H1 (cell line): ENCODE measurements at regions of chr7 and their contacts with region 1.

Region 1: GRCh38 chr7:96131525-96131924 is 190.4 kb downstream of the SLC25A13 start:
- DNase-seq: no peak
- H3K4me3 ChIP-seq: no peak overlapping the region
- H3K27ac ChIP-seq: no peak overlapping the region
- H3K4me1 ChIP-seq: 0 out of 7 replicates have a peak, but pooled peaks cover 0 to 2% (median 0%) of the 10 kb centered on the region in 4 experiments
- H3K27me3 ChIP-seq: no peaks in the 10 kb centered on the region
- CTCF ChIP-seq: peak; percentile 9 to 55 (median 34)
- EP300 ChIP-seq: no peak
- POLR2A ChIP-seq: no peak
- RAD21 ChIP-seq: peak; percentile 68

Region 2: DNA sequence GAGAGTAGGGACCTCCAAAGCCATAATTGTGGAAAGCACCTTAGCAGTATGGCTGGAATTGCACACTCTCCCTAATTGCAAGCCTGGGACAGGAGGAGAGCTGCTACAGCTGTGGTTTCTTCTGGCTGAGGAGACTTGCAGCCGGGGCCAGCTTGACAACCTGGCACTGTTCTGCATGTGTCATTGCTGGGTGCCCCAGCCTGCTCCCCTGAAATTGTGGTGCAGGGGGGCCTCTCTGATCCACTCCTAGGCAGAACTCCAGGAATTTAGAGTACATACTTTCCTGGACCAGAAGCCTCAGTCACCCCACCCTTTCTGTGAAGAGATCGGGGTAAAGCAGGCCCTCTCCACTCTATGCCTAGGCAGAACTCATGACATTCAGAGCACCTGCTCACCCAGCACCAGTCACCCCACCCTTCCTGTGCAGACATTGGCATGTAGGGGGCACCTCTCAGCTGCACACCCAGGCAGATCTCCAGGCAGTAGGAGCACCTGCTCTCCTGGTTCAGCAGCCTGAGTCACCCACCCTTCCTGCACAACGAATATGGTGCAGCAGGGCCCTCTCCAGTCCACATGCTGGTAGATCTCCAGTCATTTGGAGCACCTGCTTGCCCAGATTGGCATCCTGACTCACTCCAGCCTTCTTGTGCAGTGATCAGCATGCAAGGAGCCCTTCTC is 393.6 kb before region 1 on chr7:
- CTCF ChIA-PET with region 1: no interaction called
- POLR2A ChIA-PET with region 1: no interaction called
- DNase-seq: no peak
- H3K4me3 ChIP-seq: no peak overlapping the region
- H3K27ac ChIP-seq: no peak overlapping the region
- H3K4me1 ChIP-seq: no peaks in the 10 kb centered on the region
- H3K27me3 ChIP-seq: no peaks in the 10 kb centered on the region
- CTCF ChIP-seq: no peak
- EP300 ChIP-seq: no peak
- POLR2A ChIP-seq: no peak
- RAD21 ChIP-seq: no peak

Region 3: GRCh38 chr7:96034940-96035727 is 96.4 kb before region 1 on chr7:
- CTCF ChIA-PET with region 1: no interaction called
- POLR2A ChIA-PET with region 1: no interaction called
- DNase-seq: no peak
- H3K4me3 ChIP-seq: no peak overlapping the region
- H3K27ac ChIP-seq: no peak overlapping the region
- H3K4me1 ChIP-seq: peaks cover 0 to 3% (median 0%) of the 10 kb centered on the region in 4 experiments; a peak in 1 of 7 replicates
- H3K27me3 ChIP-seq: no peaks in the 10 kb centered on the region
- CTCF ChIP-seq: no peak
- EP300 ChIP-seq: no peak
- POLR2A ChIP-seq: no peak
- RAD21 ChIP-seq: no peak

Region 4: GRCh38 chr7:96104984-96105383 is 26.5 kb before region 1 on chr7:
- CTCF ChIA-PET with region 1: no interaction called
- POLR2A ChIA-PET with region 1: no interaction called
- DNase-seq: no peak
- H3K4me3 ChIP-seq: no peak overlapping the region
- H3K27ac ChIP-seq: no peak overlapping the region
- H3K4me1 ChIP-seq: no peaks in the 10 kb centered on the region
- H3K27me3 ChIP-seq: no peaks in the 10 kb centered on the region
- CTCF ChIP-seq: no peak
- EP300 ChIP-seq: no peak
- POLR2A ChIP-seq: no peak
- RAD21 ChIP-seq: no peak

Region 5: DNA sequence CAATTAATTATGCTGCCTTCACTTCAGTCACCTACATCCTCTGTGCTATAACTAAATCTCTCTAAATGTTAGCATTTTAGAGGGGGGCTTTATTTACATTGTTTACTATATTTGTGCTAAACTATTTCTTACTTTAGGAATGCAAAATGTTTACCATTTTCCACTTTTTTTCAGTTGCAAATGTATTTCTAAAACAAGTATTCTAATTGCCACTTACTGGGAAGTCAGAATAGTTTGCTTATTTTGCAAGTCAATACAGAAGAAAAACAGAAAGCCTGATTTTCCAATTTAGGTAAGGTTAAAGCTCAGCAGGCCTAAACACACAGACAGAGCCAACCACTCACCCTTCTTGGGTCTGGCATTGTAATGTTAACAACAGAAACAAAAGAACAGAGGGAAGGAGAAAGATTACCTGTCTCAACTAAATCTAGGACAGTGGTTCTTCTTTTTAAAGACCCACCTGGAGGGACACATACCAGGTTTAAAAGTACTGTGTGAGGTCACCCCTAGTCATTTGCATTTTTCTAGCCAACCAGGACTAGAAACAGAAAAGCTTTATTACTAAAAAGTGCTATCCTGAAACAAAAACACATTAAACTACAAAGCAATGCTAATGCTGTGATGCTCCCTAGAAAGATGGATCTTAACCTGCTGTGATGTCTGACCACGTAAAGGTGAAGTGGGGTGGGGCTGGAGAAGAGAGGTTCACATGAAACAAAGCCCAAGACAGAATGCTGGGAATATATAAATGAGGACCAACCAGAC is 12.2 kb after region 1 on chr7:
- CTCF ChIA-PET with region 1: interaction called, 34 read pairs
- POLR2A ChIA-PET with region 1: interaction called, 4 read pairs
- DNase-seq: peak in 1 of 2 experiments; percentile 54
- H3K4me3 ChIP-seq: no peak overlapping the region; a peak in 2 of 8 replicates
- H3K27ac ChIP-seq: no peak overlapping the region
- H3K4me1 ChIP-seq: peaks cover 2 to 9% (median 6%) of the 10 kb centered on the region in 4 experiments; a peak in 5 of 7 replicates
- H3K27me3 ChIP-seq: peaks cover 36 to 75% (median 61%) of the 10 kb centered on the region in 4 experiments
- CTCF ChIP-seq: no peak
- EP300 ChIP-seq: peak in 1 of 2 experiments; percentile 92; a peak in 1 of 3 replicates
- POLR2A ChIP-seq: no peak
- RAD21 ChIP-seq: 0 out of 4 replicates have a peak, but pooled peaks of 1 of the 2 experiments have one; percentile 6